ENCODE measurements at regions of chr14 and their contacts with region 1.

Region 1: DNA sequence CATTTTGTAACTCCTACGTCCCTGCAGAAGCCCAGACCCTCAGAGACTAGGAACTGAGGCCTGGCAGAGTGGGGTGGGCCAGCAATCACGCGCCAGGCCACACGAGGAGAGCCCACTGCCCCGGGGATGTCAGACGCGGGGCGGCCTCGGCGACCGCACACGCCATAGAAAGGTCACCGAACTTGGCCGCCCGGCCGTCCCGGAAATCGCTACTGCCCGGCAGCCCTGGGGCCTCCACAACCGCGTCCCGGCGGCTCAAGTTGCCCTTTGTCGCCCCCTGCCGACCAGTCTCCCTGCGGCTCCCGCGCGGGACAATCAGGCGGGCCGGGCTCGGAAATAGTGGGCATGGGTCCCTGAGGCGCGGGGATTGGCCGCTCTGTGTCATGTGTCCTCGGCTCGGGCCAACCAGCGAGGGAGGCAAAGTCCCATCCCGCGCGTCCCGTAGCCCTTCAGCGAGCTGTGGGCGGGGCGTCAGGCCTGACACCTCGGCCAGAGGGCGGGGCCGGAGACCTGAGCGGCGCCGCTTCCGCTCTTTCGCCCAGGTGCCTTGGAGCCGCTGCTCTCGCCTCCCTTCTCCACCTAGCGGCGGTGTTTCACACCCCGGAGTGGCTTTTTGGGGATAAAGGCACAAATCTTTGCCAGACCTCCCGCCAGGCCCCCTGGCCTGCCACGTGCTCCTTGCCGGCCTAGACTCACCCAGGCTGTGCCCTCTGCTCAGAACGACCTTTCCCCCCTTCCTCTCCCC is 33.4 kb upstream of the DEGS2 start:
- DNase-seq: peak; percentile 98
- ATAC-seq: peak; percentile 99
- H3K4me3 Mint-ChIP-seq: peak overlapping the region; percentile 75
- H3K27ac Mint-ChIP-seq: peak overlapping the region; percentile 85
- H3K4me1 Mint-ChIP-seq: peaks cover 5% of the 10 kb centered on the region
- H3K27me3 Mint-ChIP-seq: no peaks in the 10 kb centered on the region
- CTCF ChIP-seq: no peak

Region 2: GRCh38 chr14:99971087-99971940 is 221.5 kb before region 1 on chr14:
- CTCF ChIA-PET with region 1: no interaction called
- POLR2A ChIA-PET with region 1: no interaction called
- intact Hi-C with region 1: loop called (anchors 1 kb)
- DNase-seq: peak; percentile 68
- ATAC-seq: peak; percentile 90
- H3K4me3 Mint-ChIP-seq: peak overlapping the region; percentile 76
- H3K27ac Mint-ChIP-seq: no peak overlapping the region
- H3K4me1 Mint-ChIP-seq: peaks cover 12% of the 10 kb centered on the region
- H3K27me3 Mint-ChIP-seq: peaks cover 46% of the 10 kb centered on the region
- CTCF ChIP-seq: no peak

Region 3: DNA sequence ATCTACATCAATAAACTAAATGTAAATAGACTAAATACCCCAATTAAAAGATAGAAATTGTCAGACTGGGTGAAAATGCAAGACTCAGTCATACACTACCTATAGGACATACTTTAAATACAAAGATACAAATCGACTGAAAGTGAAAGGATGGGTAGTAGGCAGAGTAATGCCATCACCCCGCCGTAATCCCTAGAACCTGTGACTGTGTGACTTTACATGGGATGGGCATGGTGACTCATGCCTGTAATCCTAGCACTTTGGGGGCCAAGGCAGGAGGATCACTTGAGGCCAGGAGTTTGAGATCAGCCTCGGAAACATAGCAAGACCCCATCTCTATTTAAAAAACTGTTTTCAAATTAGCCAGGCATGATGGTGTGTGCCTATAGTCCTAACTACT is 130.3 kb before region 1 on chr14:
- CTCF ChIA-PET with region 1: interaction called, 16 read pairs
- POLR2A ChIA-PET with region 1: interaction called, 9 read pairs
- intact Hi-C with region 1: loop called (anchors 1 kb)
- DNase-seq: no peak
- ATAC-seq: no peak
- H3K4me3 Mint-ChIP-seq: peak overlapping the region; percentile 44
- H3K27ac Mint-ChIP-seq: peak overlapping the region; percentile 98
- H3K4me1 Mint-ChIP-seq: peaks cover 77% of the 10 kb centered on the region
- H3K27me3 Mint-ChIP-seq: no peaks in the 10 kb centered on the region
- CTCF ChIP-seq: no peak

Region 4: DNA sequence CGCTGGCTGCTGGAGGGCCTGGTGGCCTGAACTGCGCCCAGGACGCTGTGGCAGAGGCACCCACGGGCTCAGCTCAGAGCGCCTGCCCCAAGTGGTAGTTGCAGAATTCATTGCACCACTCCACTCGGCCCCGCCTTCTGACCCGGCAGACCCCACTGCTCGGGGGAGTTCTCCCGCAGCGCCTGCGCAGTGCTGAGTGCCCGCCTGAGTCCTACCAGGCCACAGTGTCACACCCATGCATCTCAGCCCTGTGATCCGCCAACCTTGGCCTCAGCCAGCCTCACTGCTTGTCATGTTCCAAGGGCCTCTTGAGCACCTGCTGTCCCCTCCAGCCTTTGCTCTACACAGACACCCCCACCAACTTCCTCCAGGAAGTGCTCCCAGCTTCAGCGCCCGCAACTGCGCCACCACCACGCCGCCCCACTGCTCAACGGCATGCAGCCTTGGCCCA is 45.6 kb before region 1 on chr14:
- CTCF ChIA-PET with region 1: interaction called, 21 read pairs
- POLR2A ChIA-PET with region 1: no interaction called
- intact Hi-C with region 1: loop called (anchors 1 kb)
- DNase-seq: no peak
- ATAC-seq: peak; percentile 73
- H3K4me3 Mint-ChIP-seq: peak overlapping the region; percentile 68
- H3K27ac Mint-ChIP-seq: peak overlapping the region; percentile 82
- H3K4me1 Mint-ChIP-seq: peaks cover 29% of the 10 kb centered on the region
- H3K27me3 Mint-ChIP-seq: no peaks in the 10 kb centered on the region
- CTCF ChIP-seq: no peak

Region 5: GRCh38 chr14:100221533-100222223 is 28.8 kb after region 1 on chr14:
- CTCF ChIA-PET with region 1: interaction called, 14 read pairs
- POLR2A ChIA-PET with region 1: interaction called, 5 read pairs
- intact Hi-C with region 1: no loop called
- DNase-seq: peak; percentile 37
- ATAC-seq: peak; percentile 97
- H3K4me3 Mint-ChIP-seq: no peak overlapping the region
- H3K27ac Mint-ChIP-seq: no peak overlapping the region
- H3K4me1 Mint-ChIP-seq: peaks cover 19% of the 10 kb centered on the region
- H3K27me3 Mint-ChIP-seq: no peaks in the 10 kb centered on the region
- CTCF ChIP-seq: no peak

Region 6: GRCh38 chr14:100317912-100318808 is 125.3 kb after region 1 on chr14:
- CTCF ChIA-PET with region 1: no interaction called
- POLR2A ChIA-PET with region 1: interaction called, 3 read pairs
- intact Hi-C with region 1: loop called (anchors 1 kb)
- DNase-seq: peak; percentile 76
- ATAC-seq: peak; percentile 98
- H3K4me3 Mint-ChIP-seq: peak overlapping the region; percentile 80
- H3K27ac Mint-ChIP-seq: peak overlapping the region; percentile 82
- H3K4me1 Mint-ChIP-seq: peaks cover 3% of the 10 kb centered on the region
- H3K27me3 Mint-ChIP-seq: no peaks in the 10 kb centered on the region
- CTCF ChIP-seq: peak; percentile 78